H1 (cell line): ENCODE measurements at regions of chr20 and their contacts with region 1.

Region 1: DNA sequence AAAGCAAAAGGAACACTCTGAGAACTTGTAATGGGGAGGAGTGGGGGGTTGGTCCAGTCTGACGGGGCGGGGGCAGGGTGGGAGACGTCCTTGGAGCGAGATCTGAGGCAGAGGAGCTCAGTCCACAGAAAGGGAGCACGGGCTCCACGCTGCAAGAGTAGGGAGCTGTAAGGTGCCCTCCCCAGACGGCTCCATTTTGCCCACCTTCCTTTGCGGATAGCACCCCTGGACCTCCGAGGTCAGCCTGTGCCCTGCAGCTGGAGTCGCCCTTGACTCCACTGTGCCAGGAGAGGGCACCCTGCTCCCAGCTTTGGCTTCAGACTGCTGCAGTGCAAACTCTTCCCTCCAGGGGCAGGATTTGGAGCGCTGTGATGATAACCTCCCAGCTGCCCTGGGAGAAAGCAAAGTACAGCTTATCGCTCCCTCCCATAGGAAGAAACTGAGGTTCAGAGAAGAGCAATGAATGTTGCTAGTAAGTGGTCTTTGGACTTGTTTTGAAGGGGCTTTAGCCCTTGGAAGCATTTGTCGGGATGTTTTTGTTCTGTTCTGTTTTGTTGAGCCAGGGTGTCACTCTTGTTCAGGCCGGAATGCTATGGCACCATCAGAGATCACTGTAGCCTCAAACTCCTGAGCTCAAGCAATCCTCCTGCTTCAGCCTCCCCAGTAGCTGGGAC is 9.5 kb upstream of the AHCY start:
- DNase-seq: peak; percentile 87 to 97
- H3K4me3 ChIP-seq: peak overlapping the region; percentile 1 to 67 (median 51); a peak in 7 of 8 replicates
- H3K27ac ChIP-seq: no peak overlapping the region
- H3K4me1 ChIP-seq: peaks cover 0 to 3% (median 0%) of the 10 kb centered on the region in 4 experiments; a peak in 2 of 7 replicates
- H3K27me3 ChIP-seq: peaks cover 0 to 8% (median 7%) of the 10 kb centered on the region in 4 experiments; a peak in 5 of 7 replicates
- CTCF ChIP-seq: peak; percentile 100
- EP300 ChIP-seq: peak in 1 of 2 experiments; percentile 33; a peak in 1 of 3 replicates
- POLR2A ChIP-seq: no peak
- RAD21 ChIP-seq: peak; percentile 100

Region 2: DNA sequence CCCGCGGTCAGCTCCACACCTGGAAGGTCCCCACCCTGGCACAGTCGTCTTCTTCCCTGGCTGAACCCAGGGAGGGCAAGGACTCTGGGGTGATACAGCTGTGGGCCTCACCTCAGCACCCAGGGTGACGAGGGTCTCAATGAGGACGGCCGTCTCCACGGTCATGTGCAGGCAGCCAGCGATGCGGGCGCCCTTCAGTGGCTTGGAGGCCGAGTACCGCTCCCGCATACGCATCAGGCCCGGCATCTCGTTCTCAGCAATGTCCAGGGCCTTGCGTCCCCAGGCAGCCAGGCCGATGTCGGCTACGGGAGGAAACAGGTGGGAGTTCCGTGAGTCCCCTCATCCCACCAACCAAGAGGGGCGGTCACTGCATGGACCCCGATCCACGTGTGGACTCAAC is 17.4 kb before region 1 on chr20:
- CTCF ChIA-PET with region 1: interaction called, 19 read pairs
- POLR2A ChIA-PET with region 1: no interaction called
- DNase-seq: no peak
- H3K4me3 ChIP-seq: no peak overlapping the region
- H3K27ac ChIP-seq: no peak overlapping the region
- H3K4me1 ChIP-seq: no peaks in the 10 kb centered on the region; a peak in 1 of 7 replicates
- H3K27me3 ChIP-seq: no peaks in the 10 kb centered on the region
- CTCF ChIP-seq: no peak
- EP300 ChIP-seq: no peak
- POLR2A ChIP-seq: no peak
- RAD21 ChIP-seq: no peak

Region 3: GRCh38 chr20:34363062-34363464 is 50.4 kb after region 1 on chr20 and contains the start of gene ITCH:
- CTCF ChIA-PET with region 1: interaction called, 24 read pairs
- POLR2A ChIA-PET with region 1: interaction called, 8 read pairs
- DNase-seq: peak; percentile 93 to 94
- H3K4me3 ChIP-seq: peak within 1 kb of the TSS; percentile 78 to 91 (median 84)
- H3K27ac ChIP-seq: peak within 1 kb of the TSS; percentile 76
- H3K4me1 ChIP-seq: peaks cover 3 to 7% (median 5%) of the 10 kb centered on the region in 4 experiments; a peak in 4 of 7 replicates
- H3K27me3 ChIP-seq: no peaks in the 10 kb centered on the region
- CTCF ChIP-seq: no peak
- EP300 ChIP-seq: no peak
- POLR2A ChIP-seq: peak; percentile 77 to 88
- RAD21 ChIP-seq: no peak
- total RNA-seq, gene ITCH: 39.2 and 45.2 TPM in 2 replicates

Region 4: DNA sequence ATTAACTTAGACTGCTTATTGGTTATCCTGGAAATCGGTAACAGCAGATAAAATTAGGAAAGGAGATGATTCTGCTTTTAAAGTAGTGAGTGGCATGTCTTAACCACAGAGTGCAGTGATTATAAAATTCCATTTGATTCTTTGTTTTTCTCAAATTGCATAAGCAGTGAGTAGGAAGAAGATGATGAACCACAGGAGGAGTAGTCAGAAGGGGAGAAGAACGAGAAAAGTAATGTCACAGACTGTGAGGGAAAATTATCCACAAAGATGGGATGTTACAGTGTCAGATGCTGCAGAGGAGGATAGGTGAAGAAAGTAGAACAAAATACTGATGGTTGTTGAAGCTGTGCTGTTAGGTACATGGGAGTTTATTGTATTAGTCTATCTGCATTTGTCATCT is 113.3 kb after region 1 on chr20:
- CTCF ChIA-PET with region 1: interaction called, 29 read pairs
- POLR2A ChIA-PET with region 1: no interaction called
- DNase-seq: no peak
- H3K4me3 ChIP-seq: no peak overlapping the region
- H3K27ac ChIP-seq: no peak overlapping the region
- H3K4me1 ChIP-seq: no peaks in the 10 kb centered on the region
- H3K27me3 ChIP-seq: no peaks in the 10 kb centered on the region
- CTCF ChIP-seq: no peak
- EP300 ChIP-seq: no peak
- POLR2A ChIP-seq: no peak
- RAD21 ChIP-seq: no peak

Region 5: DNA sequence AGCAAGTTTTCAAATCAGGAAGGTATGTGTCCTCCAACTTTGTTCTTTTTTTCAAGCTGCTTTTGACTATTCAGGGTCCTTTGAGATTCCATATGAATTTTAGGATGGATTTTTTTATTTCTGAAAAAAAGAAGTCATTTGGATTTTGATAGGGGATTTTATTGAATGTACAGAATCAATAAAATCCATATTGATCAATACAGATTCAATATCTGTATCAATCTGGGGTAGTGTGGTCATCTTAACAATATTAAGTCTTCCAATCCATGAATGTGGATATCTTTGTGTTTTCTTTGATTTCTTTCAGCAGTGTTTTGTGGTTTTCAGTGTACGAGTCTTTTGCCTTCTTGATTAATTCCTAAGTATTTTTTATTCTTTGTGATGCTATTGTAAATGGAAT is 152.6 kb after region 1 on chr20:
- CTCF ChIA-PET with region 1: interaction called, 18 read pairs
- POLR2A ChIA-PET with region 1: no interaction called
- DNase-seq: no peak
- H3K4me3 ChIP-seq: no peak overlapping the region
- H3K27ac ChIP-seq: no peak overlapping the region
- H3K4me1 ChIP-seq: no peaks in the 10 kb centered on the region
- H3K27me3 ChIP-seq: no peaks in the 10 kb centered on the region
- CTCF ChIP-seq: no peak
- EP300 ChIP-seq: no peak
- POLR2A ChIP-seq: no peak
- RAD21 ChIP-seq: no peak

Region 6: DNA sequence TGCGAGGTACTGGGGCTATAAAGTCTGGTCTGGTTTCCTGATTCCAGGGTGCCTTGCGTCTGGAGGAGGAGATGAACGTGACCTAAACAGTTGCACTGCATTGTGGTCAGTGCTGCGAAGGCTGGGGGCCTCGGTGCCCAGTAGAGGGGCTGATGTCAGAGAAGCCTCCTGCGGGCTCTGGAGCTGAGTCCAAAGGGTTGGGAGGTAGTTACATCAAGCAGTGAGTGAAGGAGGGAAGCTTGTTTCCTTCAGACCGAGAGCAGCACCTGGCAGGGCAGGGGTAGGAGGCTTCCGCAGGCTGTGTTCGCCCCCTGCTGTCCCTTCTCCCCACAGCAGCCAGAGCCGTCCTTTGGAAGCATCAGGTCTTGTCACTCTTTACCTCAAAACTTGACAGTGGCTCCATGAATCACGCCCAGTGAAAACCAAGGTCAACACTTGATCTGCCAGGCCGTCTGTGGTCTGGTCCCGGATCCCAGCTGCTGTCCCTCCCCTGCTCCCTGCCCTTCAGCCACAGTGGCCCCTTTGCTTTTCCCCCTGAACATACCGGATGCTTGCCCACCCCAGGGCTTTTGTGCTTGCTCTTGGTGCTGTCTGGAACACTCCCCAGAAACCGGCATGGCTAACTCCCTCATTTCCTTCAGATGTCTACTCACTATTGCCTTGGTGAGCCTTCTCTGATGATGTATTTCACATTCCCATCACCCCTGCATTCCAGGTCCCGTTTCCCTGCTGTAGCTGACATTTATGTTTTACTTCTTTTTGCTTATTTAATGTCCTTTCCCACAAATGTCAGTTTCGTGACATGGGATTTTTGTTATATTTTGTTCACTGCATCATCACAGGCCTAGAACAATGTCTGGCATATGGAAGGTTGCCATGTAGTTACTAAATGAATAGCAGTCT is 210.5 kb after region 1 on chr20:
- CTCF ChIA-PET with region 1: interaction called, 50 read pairs
- POLR2A ChIA-PET with region 1: interaction called, 7 read pairs
- DNase-seq: peak in 1 of 2 experiments; percentile 81
- H3K4me3 ChIP-seq: no peak overlapping the region
- H3K27ac ChIP-seq: no peak overlapping the region
- H3K4me1 ChIP-seq: peaks cover 0 to 4% (median 3%) of the 10 kb centered on the region in 4 experiments; a peak in 3 of 7 replicates
- H3K27me3 ChIP-seq: no peaks in the 10 kb centered on the region
- CTCF ChIP-seq: peak; percentile 83 to 97 (median 93)
- EP300 ChIP-seq: no peak
- POLR2A ChIP-seq: no peak
- RAD21 ChIP-seq: peak; percentile 89